Activated CD4-positive, alpha-beta T cell treated with anti-CD3 and anti-CD28 coated beads for 36 hours (primary cell): ENCODE measurements at regions of chr1 and their contacts with region 1.

Region 1: GRCh38 chr1:1324521-1325287 is at the starts of genes CPTP and INTS11:
- DNase-seq: peak; percentile 98
- ATAC-seq: peak; percentile 90
- H3K4me3 Mint-ChIP-seq: peak within 1 kb of the TSS; percentile 80
- H3K27ac Mint-ChIP-seq: peak within 1 kb of the TSS; percentile 83
- H3K4me1 Mint-ChIP-seq: peaks cover 31% of the 10 kb centered on the region
- H3K27me3 Mint-ChIP-seq: no peaks in the 10 kb centered on the region
- total RNA-seq, gene CPTP: 9.9 to 11.4 TPM
- total RNA-seq, gene INTS11: 117 to 151 TPM

Region 2: GRCh38 chr1:1033009-1033587 is 291.6 kb before region 1 on chr1:
- CTCF ChIA-PET with region 1: no interaction called
- POLR2A ChIA-PET with region 1: no interaction called
- intact Hi-C with region 1: loop called in 1 of 2 experiments (anchors 1 kb)
- DNase-seq: peak; percentile 97
- ATAC-seq: peak; percentile 95
- H3K4me3 Mint-ChIP-seq: peak overlapping the region; percentile 33
- H3K27ac Mint-ChIP-seq: no peak overlapping the region
- H3K4me1 Mint-ChIP-seq: peaks cover 5% of the 10 kb centered on the region
- H3K27me3 Mint-ChIP-seq: peaks cover 18% of the 10 kb centered on the region

Region 3: GRCh38 chr1:1337793-1338147 is 13.1 kb after region 1 on chr1:
- CTCF ChIA-PET with region 1: no interaction called
- POLR2A ChIA-PET with region 1: no interaction called
- intact Hi-C with region 1: loop called in 1 of 2 experiments (anchors 1 kb)
- DNase-seq: peak; percentile 72
- ATAC-seq: peak; percentile 83
- H3K4me3 Mint-ChIP-seq: no peak overlapping the region
- H3K27ac Mint-ChIP-seq: no peak overlapping the region
- H3K4me1 Mint-ChIP-seq: no peaks in the 10 kb centered on the region
- H3K27me3 Mint-ChIP-seq: no peaks in the 10 kb centered on the region

Region 4: DNA sequence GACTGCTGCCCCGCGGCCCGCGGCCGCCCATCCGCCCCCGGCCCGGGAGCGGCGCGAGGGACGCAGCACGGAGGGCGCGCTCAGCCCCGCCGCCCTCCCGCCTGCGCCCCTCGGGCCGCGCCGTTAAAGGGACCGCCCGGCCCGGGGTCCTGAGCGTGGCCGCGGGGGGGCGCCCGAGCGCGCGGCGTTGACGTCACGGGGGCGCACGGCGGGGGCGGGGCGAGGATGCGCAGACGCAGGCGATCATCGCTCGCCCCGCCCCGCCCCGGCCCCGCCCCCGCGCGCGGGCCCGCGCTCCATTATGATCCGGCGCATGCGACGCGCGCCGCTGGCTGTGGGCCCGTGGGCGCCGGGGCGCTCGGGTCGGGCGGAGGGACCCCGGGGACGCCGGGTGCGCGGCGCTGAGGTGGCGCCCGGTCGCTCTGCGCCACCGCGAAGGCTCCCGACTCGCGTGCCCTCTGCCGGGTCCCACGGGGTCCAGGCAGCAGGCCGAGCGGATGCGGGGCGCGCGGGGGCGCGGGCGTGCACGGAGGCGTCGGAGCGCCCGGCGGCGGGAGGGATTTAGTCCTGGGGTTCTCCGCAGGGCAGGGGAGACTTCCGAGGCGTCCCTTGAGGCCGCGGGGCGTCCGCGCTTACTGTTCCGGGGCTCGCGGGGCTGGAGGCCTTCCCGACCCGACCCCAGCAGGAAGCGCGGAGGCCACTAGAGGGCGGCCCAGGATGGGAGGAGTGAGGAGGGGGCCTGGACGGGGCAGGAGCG is 24.7 kb after region 1 on chr1 and contains the start of gene DVL1:
- CTCF ChIA-PET with region 1: no interaction called
- POLR2A ChIA-PET with region 1: no interaction called
- intact Hi-C with region 1: loop called in 1 of 2 experiments (anchors 1 kb)
- DNase-seq: peak; percentile 81
- ATAC-seq: peak; percentile 71
- H3K4me3 Mint-ChIP-seq: peak within 1 kb of the TSS; percentile 74
- H3K27ac Mint-ChIP-seq: no peak within 1 kb of the TSS
- H3K4me1 Mint-ChIP-seq: peaks cover 25% of the 10 kb centered on the region
- H3K27me3 Mint-ChIP-seq: peaks cover 11% of the 10 kb centered on the region
- total RNA-seq, gene DVL1: 35.3 to 35.5 TPM

Region 5: GRCh38 chr1:1399187-1399871 is 74.6 kb after region 1 on chr1 and contains the start of gene CCNL2:
- CTCF ChIA-PET with region 1: interaction called, 3 read pairs
- POLR2A ChIA-PET with region 1: no interaction called
- intact Hi-C with region 1: loop called in 1 of 2 experiments (anchors 1 kb)
- DNase-seq: peak; percentile 100
- ATAC-seq: peak; percentile 97
- H3K4me3 Mint-ChIP-seq: peak within 1 kb of the TSS; percentile 93
- H3K27ac Mint-ChIP-seq: peak within 1 kb of the TSS; percentile 91
- H3K4me1 Mint-ChIP-seq: peaks cover 52% of the 10 kb centered on the region
- H3K27me3 Mint-ChIP-seq: no peaks in the 10 kb centered on the region
- total RNA-seq, gene CCNL2: 73.6 to 89.7 TPM

Region 6: GRCh38 chr1:1406817-1407635 is 82.3 kb after region 1 on chr1 and contains the start of gene MRPL20:
- CTCF ChIA-PET with region 1: interaction called, 3 read pairs
- POLR2A ChIA-PET with region 1: no interaction called
- intact Hi-C with region 1: loop called in 1 of 2 experiments (anchors 1 kb)
- DNase-seq: peak; percentile 98
- ATAC-seq: peak; percentile 95
- H3K4me3 Mint-ChIP-seq: peak within 1 kb of the TSS; percentile 92
- H3K27ac Mint-ChIP-seq: peak within 1 kb of the TSS; percentile 91
- H3K4me1 Mint-ChIP-seq: peaks cover 41% of the 10 kb centered on the region
- H3K27me3 Mint-ChIP-seq: no peaks in the 10 kb centered on the region
- total RNA-seq, gene MRPL20: 126 to 143 TPM

Region 7: GRCh38 chr1:1630965-1631781 is 306.5 kb after region 1 on chr1:
- CTCF ChIA-PET with region 1: no interaction called
- POLR2A ChIA-PET with region 1: no interaction called
- intact Hi-C with region 1: no loop called
- DNase-seq: peak; percentile 38
- ATAC-seq: no peak
- H3K4me3 Mint-ChIP-seq: no peak overlapping the region
- H3K27ac Mint-ChIP-seq: no peak overlapping the region
- H3K4me1 Mint-ChIP-seq: peaks cover 7% of the 10 kb centered on the region
- H3K27me3 Mint-ChIP-seq: peaks cover 4% of the 10 kb centered on the region